CD8-positive, alpha-beta T cell (primary cell): ENCODE measurements at regions of chr1 and their contacts with region 1.

Region 1: GRCh38 chr1:200907611-200908097 is 13.0 kb downstream of the INAVA start:
- DNase-seq: no peak
- ATAC-seq: no peak
- H3K4me3 ChIP-seq: no peak overlapping the region
- H3K4me3 Mint-ChIP-seq: no peak overlapping the region
- H3K27ac ChIP-seq: no peak overlapping the region
- H3K27ac Mint-ChIP-seq: no peak overlapping the region
- H3K4me1 ChIP-seq: peaks cover 9% of the 10 kb centered on the region
- H3K4me1 Mint-ChIP-seq: peaks cover 12% of the 10 kb centered on the region
- H3K27me3 ChIP-seq: peaks cover 0 to 2% of the 10 kb centered on the region in 2 experiments
- H3K27me3 Mint-ChIP-seq: no peaks in the 10 kb centered on the region
- CTCF ChIP-seq: no peak

Region 2: DNA sequence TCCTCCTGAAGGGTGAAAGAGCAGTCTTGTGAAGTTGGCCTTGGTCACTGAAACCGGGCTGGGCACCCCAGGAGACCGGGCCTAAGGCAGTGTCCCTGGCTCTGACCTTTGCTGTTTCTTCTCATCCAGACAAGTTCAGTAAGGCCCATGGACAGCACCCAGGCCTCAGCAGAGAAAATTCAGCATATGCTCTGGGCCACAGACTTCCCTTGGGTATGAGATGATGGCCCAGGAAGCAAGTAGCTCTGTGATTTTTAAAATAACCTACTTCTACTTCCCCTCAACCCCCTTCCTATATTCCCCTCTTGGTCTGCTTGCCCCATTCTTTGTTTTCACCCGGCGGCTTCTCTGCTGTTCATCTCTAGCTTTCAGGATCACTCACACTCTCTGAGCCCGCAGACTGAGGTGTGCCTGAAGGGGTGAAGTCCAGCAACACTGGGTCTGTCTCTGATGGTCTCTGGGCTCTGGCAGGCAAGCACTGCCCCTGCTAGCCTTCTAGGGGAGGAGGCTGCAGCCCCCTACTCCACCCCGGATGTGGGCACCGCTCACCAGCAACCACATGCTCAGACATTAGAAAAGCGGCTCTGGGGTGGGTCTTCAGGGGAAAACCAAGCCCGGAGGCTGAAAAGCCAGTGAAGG is 37.8 kb before region 1 on chr1:
- CTCF ChIA-PET with region 1: interaction called, 3 read pairs
- POLR2A ChIA-PET with region 1: no interaction called
- intact Hi-C with region 1: loop called in 1 of 2 experiments (anchors 5 kb)
- DNase-seq: peak in 3 of 9 experiments; percentile 40 to 59 (median 46)
- ATAC-seq: peak; percentile 27
- H3K4me3 ChIP-seq: peak overlapping the region in 1 of 2 experiments; percentile 30
- H3K4me3 Mint-ChIP-seq: peak overlapping the region; percentile 27
- H3K27ac ChIP-seq: peak overlapping the region in 1 of 2 experiments; percentile 64
- H3K27ac Mint-ChIP-seq: peak overlapping the region; percentile 86
- H3K4me1 ChIP-seq: peaks cover 13% of the 10 kb centered on the region
- H3K4me1 Mint-ChIP-seq: peaks cover 42% of the 10 kb centered on the region
- H3K27me3 ChIP-seq: peaks cover 0 to 2% of the 10 kb centered on the region in 2 experiments
- H3K27me3 Mint-ChIP-seq: peaks cover 22% of the 10 kb centered on the region
- CTCF ChIP-seq: no peak